ENCODE measurements at regions of chr11 and their contacts with region 1.

Region 1: DNA sequence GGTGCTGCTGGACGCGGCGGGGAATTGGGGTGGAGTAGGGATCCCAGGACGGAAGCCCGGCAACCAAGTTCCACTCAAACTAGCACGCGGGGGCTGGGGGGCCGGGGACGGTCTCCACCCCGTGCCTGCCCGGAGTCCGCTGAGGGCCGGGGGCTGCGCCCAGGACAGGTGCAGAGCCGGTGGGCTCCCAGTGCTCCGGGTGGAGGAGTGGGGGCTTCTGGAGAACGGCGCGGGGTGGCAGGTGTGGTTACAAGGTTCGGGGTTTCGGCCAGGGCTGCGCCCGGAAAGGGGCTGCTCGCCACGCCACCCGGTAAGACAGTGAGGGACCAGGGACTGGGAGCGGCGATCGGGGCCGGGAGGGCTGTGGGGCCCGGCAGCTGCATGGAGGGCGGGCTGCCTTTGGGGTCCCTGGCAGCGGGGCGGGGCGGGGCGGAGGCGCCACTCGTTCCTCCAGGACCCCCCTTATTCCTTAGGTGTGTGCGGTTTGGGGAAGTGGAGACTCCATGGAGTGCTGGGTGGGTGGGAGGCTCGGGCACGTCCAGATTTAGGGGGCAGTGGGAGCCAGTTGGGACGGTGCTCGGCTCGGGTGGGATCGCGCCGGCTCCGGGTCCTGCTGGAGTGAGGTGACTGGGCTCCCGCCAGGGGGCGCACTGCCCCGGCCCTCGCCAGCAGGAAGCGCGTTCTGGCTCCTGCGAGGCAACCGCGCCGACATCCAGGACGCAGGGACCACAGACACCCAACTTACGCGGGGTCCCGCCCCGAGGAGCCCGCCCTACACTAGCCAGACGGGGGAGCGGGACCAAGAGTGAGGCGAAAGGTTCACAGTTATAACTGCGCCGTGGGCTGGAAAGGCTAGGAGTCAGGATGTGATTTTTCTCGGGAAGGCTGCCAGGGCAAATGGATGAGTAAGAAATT is 868 bp downstream of the TSPAN18 start:
- DNase-seq: peak; percentile 77 to 91 (median 87)
- H3K4me3 ChIP-seq: peak overlapping the region; percentile 55
- H3K27ac ChIP-seq: peak overlapping the region; percentile 43 to 72
- H3K4me1 ChIP-seq: peaks cover 6% of the 10 kb centered on the region
- H3K27me3 ChIP-seq: no peaks in the 10 kb centered on the region
- CTCF ChIP-seq: peak; percentile 76 to 94 (median 93)
- EP300 ChIP-seq: no peak
- POLR2A ChIP-seq: peak; percentile 17

Region 2: DNA sequence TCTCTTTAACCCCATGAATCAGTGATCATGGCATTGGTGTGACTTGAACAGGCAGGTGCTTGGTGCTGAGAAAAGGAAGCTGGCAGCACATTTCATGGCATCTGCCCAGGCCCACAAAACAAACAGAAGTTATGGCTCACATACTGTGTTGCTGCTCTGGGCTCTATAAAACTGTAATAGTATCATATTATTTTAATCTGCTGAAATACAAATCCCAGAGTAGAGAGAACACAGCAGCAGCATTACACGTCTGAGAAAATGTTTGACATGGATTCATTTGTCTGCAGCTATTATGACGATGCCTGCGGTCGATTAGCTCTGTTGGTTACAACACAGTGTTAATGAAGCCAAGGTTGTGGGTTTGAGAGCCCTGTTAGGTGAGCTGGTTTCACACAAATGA is 498.5 kb before region 1 on chr11:
- intact Hi-C with region 1: no loop called
- DNase-seq: no peak
- H3K4me3 ChIP-seq: no peak overlapping the region
- H3K27ac ChIP-seq: no peak overlapping the region
- H3K4me1 ChIP-seq: no peaks in the 10 kb centered on the region
- H3K27me3 ChIP-seq: no peaks in the 10 kb centered on the region
- CTCF ChIP-seq: no peak
- EP300 ChIP-seq: no peak
- POLR2A ChIP-seq: no peak

Region 3: GRCh38 chr11:44361813-44362212 is 365.8 kb before region 1 on chr11:
- intact Hi-C with region 1: no loop called
- DNase-seq: no peak
- H3K4me3 ChIP-seq: peak overlapping the region; percentile 12
- H3K27ac ChIP-seq: no peak overlapping the region
- H3K4me1 ChIP-seq: peaks cover 3% of the 10 kb centered on the region
- H3K27me3 ChIP-seq: no peaks in the 10 kb centered on the region
- CTCF ChIP-seq: no peak
- EP300 ChIP-seq: no peak
- POLR2A ChIP-seq: no peak

Region 4: DNA sequence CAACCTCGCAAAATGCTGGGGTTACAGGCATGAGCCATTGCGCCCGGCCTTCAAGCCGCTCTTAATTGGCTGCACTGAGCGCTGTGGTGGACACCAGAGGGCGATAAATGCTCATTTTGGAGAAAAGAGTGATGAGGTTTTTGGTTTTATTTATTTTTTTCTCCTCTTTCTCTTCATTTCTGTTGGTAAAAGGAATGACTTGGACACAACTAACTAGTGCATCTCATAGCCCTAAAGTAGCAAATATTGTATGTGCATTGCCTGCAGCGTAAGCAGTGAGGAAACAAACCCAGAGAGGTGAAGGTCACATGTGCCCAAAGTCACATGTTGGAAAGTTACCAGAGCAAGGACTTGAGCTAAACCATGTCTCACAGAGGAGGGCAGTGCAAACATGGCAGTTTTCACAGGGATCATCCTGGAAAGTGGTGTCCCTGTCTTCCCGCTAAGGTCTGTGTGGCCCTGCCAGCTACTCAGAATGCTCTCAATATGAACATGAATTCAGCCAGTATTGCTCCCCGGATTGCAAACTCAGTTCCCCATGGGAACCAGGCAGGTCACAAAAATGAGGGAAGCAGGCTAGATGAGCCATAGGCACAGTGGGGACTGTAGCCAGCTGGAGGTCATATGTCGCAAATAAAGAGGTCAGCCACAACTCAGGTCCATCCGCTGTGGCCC is 170.8 kb before region 1 on chr11:
- intact Hi-C with region 1: loop called in 2 of 4 experiments (anchors 10 kb)
- DNase-seq: peak; percentile 68 to 80 (median 78)
- H3K4me3 ChIP-seq: no peak overlapping the region
- H3K27ac ChIP-seq: no peak overlapping the region
- H3K4me1 ChIP-seq: no peaks in the 10 kb centered on the region
- H3K27me3 ChIP-seq: no peaks in the 10 kb centered on the region
- CTCF ChIP-seq: peak; percentile 66 to 85 (median 83)
- EP300 ChIP-seq: no peak
- POLR2A ChIP-seq: no peak

Region 5: DNA sequence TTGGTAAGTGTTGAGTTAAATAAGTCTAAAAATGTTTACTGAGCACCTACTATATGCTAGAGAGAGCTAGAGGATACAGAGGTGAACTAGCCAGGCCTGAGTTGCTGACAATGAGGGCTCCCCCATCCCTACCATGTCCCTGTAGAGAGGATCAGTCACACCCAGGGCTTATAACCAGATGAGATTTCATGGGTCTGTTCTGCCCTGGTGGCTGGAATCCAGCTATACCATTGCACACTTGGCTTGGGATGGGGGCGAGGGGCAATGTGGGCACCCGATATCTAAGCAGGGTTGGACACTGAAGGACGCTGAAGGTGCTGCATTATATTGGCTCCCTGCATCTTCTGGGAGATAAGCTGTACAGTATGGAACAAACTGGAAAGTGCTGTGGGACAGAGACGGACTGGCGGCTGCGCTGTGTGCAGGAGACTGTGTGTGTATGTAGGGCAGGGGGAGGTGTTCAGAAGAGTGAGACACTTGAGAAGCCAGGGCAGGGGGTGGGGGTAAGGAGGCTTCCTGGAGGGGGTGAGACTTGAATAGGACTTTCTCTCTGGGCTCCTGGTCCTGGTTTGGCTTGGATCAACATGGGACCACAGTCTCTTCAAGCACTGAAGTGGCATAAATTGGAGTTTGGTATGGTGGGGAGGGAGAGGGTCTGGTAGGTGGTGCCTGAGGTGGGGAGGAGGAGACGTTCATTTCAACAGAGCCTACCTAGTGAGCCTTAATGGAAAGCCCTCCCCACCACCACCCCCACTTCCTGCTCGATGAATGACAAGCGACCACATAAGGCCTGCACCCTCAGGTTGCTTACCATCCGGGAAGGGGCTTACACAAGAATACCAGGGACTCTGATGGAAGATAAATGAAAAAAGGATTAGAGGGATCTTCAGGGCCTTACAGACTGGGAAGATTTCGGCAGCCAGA is 160.4 kb before region 1 on chr11:
- intact Hi-C with region 1: no loop called
- DNase-seq: no peak
- H3K4me3 ChIP-seq: no peak overlapping the region
- H3K27ac ChIP-seq: no peak overlapping the region
- H3K4me1 ChIP-seq: peaks cover 29% of the 10 kb centered on the region
- H3K27me3 ChIP-seq: no peaks in the 10 kb centered on the region
- CTCF ChIP-seq: no peak
- EP300 ChIP-seq: no peak
- POLR2A ChIP-seq: no peak

Region 6: DNA sequence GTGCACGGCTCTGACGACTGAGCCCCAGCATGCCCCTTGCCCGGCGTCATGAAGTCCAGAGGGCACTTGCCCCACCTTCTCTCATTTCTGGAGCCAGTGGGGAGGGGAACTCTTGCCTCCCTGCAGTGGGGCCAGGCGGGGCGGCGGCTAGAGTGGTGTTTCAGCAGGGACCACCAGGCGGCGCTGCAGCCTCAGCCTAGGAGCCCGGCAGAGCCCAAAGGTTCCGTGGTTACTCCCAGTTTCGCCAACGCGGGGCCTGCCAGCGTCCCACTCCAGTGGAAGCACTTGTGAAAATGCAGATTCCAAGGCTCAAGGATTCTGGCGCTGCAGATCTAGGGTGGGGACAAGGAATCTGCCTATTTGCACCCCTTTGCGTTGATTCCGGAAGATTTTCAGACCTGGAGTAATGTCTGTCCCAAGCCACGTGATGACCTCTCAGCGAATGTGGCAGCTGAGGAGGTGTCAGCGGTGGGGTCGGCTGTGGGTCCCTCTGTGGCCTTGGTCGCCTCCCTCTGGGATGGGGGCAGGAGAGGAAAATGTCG is 106.4 kb before region 1 on chr11:
- intact Hi-C with region 1: loop called in 2 of 4 experiments (anchors 5 to 10 kb)
- DNase-seq: peak; percentile 61 to 86 (median 80)
- H3K4me3 ChIP-seq: no peak overlapping the region
- H3K27ac ChIP-seq: no peak overlapping the region
- H3K4me1 ChIP-seq: no peaks in the 10 kb centered on the region
- H3K27me3 ChIP-seq: no peaks in the 10 kb centered on the region
- CTCF ChIP-seq: peak; percentile 88 to 96 (median 92)
- EP300 ChIP-seq: no peak
- POLR2A ChIP-seq: no peak

Region 7: DNA sequence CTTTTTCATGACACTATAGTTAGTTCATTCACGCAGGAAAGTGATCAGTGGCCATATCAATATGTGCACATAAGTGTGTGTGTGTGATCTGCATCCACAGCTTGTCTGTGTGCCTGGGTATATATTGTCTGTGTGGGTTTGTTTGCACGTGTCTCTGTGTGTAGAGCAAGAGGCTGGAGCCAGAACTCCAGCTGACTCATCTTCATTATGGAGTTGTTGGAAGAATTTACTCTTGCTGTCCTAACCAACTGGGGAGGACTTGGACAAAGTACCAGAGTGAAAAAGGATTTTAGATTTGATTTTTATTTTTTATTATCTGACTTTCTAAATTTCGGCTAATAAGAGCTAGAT is 159.1 kb after region 1 on chr11:
- intact Hi-C with region 1: loop called in 3 of 4 experiments (anchors 5 kb)
- DNase-seq: no peak
- H3K4me3 ChIP-seq: no peak overlapping the region
- H3K27ac ChIP-seq: no peak overlapping the region
- H3K4me1 ChIP-seq: peaks cover 1% of the 10 kb centered on the region
- H3K27me3 ChIP-seq: no peaks in the 10 kb centered on the region
- CTCF ChIP-seq: no peak
- EP300 ChIP-seq: no peak
- POLR2A ChIP-seq: no peak

Region 8: DNA sequence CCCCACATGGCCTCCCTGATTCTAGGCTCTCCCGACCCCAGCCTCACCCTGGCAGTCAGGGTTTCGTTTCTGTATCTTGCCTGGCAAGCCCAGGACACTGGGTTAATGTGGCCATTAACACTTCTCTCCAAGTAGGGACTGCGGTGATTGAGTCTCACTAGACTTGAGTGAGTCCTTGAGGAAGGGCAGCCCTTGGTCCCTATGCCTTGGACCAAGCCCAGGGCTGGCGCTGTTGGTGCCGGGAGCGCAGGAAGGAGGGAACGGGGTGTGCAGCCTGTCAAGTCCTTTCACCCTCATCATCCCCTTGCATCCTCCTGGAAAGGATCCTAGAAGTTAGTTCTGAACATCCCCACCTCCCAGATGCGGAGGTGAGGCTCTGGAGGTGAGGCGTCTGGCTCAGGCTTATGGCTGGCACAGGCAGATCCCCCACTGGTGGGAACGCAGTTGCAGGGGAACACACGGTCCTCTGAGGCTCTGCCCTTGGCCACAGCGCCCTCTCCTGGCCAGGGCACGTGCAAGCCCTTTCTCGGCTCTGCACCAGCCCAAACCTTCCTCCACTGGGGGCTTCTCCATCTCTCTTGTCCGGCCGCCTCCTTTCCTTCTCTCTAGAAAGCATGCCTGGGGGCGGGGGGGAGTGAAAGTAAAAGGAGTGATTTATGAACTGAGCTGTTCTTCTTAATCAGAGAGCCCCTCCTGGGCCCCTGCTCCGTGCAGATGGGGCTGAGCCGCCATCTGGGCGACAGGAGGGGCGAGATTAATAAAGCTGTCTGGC is 166.4 kb after region 1 on chr11:
- intact Hi-C with region 1: loop called (anchors 5 kb)
- DNase-seq: peak; percentile 60 to 85 (median 74)
- H3K4me3 ChIP-seq: no peak overlapping the region
- H3K27ac ChIP-seq: peak overlapping the region in 1 of 2 donors; percentile 54
- H3K4me1 ChIP-seq: peaks cover 9% of the 10 kb centered on the region
- H3K27me3 ChIP-seq: no peaks in the 10 kb centered on the region
- CTCF ChIP-seq: peak; percentile 52 to 72 (median 71)
- EP300 ChIP-seq: no peak
- POLR2A ChIP-seq: no peak

Region 9: GRCh38 chr11:44899959-44900358 is 172.3 kb after region 1 on chr11:
- intact Hi-C with region 1: loop called in 1 of 4 experiments (anchors 5 kb)
- DNase-seq: no peak
- H3K4me3 ChIP-seq: no peak overlapping the region
- H3K27ac ChIP-seq: no peak overlapping the region
- H3K4me1 ChIP-seq: no peaks in the 10 kb centered on the region
- H3K27me3 ChIP-seq: no peaks in the 10 kb centered on the region
- CTCF ChIP-seq: no peak
- EP300 ChIP-seq: no peak
- POLR2A ChIP-seq: no peak

Region 10: DNA sequence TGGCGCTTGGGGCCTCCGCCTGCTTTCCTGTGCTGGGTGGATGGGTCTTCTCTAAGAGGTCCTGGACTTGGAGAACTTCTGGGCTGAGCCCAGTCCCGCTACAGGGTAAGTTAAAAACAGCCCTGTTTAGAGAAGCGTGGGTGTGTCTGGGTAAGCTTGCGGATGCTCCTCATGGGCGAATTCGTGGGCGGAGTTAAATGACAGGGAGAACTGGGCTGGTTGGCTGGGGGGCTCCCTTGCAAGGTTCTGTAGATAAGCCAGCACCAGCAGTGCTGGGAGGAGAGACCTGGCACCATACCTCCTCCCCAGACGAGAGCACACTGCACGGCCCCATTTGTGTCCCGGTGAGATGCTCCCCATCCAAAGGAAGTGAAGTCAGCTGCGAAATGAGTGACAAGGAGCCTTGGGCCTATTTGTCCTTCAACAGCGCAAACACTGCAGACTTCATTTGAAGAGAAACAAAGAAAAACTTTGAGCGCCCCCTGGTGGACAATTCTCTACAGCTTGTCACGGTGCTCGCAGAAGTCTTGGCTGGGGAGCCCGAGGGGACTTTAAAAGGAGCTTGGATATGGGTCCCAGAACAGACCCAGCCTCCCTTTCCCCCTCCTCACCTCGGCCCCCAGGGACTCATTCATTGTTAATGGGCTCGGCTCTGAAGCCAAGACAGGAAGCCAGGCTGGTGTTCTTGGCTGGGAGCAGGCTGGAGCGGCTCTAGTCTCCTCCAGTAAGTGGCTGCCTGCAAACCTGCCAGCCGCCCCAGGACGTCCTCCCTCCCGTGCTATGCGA is 183.6 kb after region 1 on chr11:
- intact Hi-C with region 1: loop called in 2 of 4 experiments (anchors 5 kb)
- DNase-seq: peak; percentile 77 to 92 (median 85)
- H3K4me3 ChIP-seq: no peak overlapping the region
- H3K27ac ChIP-seq: no peak overlapping the region
- H3K4me1 ChIP-seq: no peaks in the 10 kb centered on the region
- H3K27me3 ChIP-seq: no peaks in the 10 kb centered on the region
- CTCF ChIP-seq: peak; percentile 74 to 78 (median 76)
- EP300 ChIP-seq: no peak
- POLR2A ChIP-seq: no peak

Measured in ovary (tissue), 10 donors.